GM13976 (cell line): ENCODE measurements at regions of chr2 and their contacts with region 1.

Region 1: GRCh38 chr2:74334931-74335333 is 8.3 kb downstream of the SLC4A5 start:
- DNase-seq: peak; percentile 60
- CTCF ChIP-seq: peak; percentile 93

Region 2: GRCh38 chr2:73759285-73759764 is 575.6 kb before region 1 on chr2:
- in situ Hi-C with region 1: no loop called
- DNase-seq: no peak
- CTCF ChIP-seq: no peak

Region 3: GRCh38 chr2:74250189-74250631 is 84.7 kb before region 1 on chr2:
- in situ Hi-C with region 1: loop called (anchors 5 kb)
- DNase-seq: peak; percentile 82
- CTCF ChIP-seq: peak; percentile 65

Region 4: GRCh38 chr2:74379851-74380789 is 45.2 kb after region 1 on chr2 and contains the start of gene DCTN1:
- in situ Hi-C with region 1: no loop called
- DNase-seq: no peak
- CTCF ChIP-seq: no peak

Region 5: GRCh38 chr2:74708883-74709282 is 374.0 kb after region 1 on chr2:
- in situ Hi-C with region 1: no loop called
- DNase-seq: no peak
- CTCF ChIP-seq: no peak